Activated CD8-positive, alpha-beta memory T cell treated with anti-CD3 and anti-CD28 coated beads, Interleukin-2, amount 10 ng/mL, durations not matched to agents 7 days and 5 days (primary cell): ENCODE measurements at regions of chr17 and their contacts with region 1.

Region 1: GRCh38 chr17:57892146-57892828 is 42.4 kb upstream of the MRPS23 start:
- DNase-seq: peak; percentile 85
- ATAC-seq: peak; percentile 88
- H3K4me3 Mint-ChIP-seq: no peak overlapping the region
- H3K27ac Mint-ChIP-seq: no peak overlapping the region
- H3K4me1 Mint-ChIP-seq: peaks cover 13% of the 10 kb centered on the region
- H3K27me3 Mint-ChIP-seq: peaks cover 11% of the 10 kb centered on the region

Region 2: DNA sequence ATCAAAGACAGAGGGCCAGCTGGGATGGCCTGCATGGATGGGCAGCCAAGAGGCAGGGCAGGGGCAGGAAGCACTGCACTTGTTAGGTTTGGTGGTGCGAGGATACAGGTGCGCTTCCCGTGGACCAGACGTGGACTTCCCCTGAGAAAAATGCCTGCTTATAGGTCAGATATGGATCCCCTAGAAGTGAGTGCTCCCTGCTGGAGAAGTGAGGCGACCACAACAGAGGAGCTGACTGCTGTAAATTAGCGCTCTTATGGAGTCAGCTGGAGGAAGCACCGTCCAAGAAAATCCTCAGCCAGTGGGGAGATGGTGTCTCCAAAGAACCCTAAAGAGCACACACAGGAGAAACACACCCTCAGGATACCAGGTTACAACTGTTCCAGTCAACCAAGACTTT is 119.5 kb before region 1 on chr17:
- CTCF ChIA-PET with region 1: no interaction called
- DNase-seq: no peak
- ATAC-seq: no peak
- H3K4me3 Mint-ChIP-seq: no peak overlapping the region
- H3K27ac Mint-ChIP-seq: no peak overlapping the region
- H3K4me1 Mint-ChIP-seq: no peaks in the 10 kb centered on the region
- H3K27me3 Mint-ChIP-seq: peaks cover 73% of the 10 kb centered on the region

Region 3: GRCh38 chr17:57955183-57955931 is 63.1 kb after region 1 on chr17 and contains the start of gene CUEDC1:
- CTCF ChIA-PET with region 1: interaction called, 13 read pairs
- DNase-seq: peak; percentile 64
- ATAC-seq: peak; percentile 74
- H3K4me3 Mint-ChIP-seq: peak within 1 kb of the TSS; percentile 34
- H3K27ac Mint-ChIP-seq: no peak within 1 kb of the TSS
- H3K4me1 Mint-ChIP-seq: peaks cover 34% of the 10 kb centered on the region
- H3K27me3 Mint-ChIP-seq: peaks cover 58% of the 10 kb centered on the region
- total RNA-seq, gene CUEDC1: not detected